Activated naive CD8-positive, alpha-beta T cell treated with anti-CD3 and anti-CD28 coated beads, Interleukin-2, amount 10 ng/mL, durations not matched to agents 7 days and 5 days (primary cell): ENCODE measurements at regions of chr1 and their contacts with region 1.

Region 1: GRCh38 chr1:6602669-6603237 is at the start of gene KLHL21:
- DNase-seq: peak; percentile 90
- ATAC-seq: peak; percentile 65
- H3K4me3 Mint-ChIP-seq: peak within 1 kb of the TSS; percentile 96
- H3K27ac Mint-ChIP-seq: peak within 1 kb of the TSS; percentile 94
- H3K4me1 Mint-ChIP-seq: peaks cover 28% of the 10 kb centered on the region
- H3K27me3 Mint-ChIP-seq: peaks cover 2% of the 10 kb centered on the region
- total RNA-seq, gene KLHL21: 39.0 to 42.0 TPM

Region 2: DNA sequence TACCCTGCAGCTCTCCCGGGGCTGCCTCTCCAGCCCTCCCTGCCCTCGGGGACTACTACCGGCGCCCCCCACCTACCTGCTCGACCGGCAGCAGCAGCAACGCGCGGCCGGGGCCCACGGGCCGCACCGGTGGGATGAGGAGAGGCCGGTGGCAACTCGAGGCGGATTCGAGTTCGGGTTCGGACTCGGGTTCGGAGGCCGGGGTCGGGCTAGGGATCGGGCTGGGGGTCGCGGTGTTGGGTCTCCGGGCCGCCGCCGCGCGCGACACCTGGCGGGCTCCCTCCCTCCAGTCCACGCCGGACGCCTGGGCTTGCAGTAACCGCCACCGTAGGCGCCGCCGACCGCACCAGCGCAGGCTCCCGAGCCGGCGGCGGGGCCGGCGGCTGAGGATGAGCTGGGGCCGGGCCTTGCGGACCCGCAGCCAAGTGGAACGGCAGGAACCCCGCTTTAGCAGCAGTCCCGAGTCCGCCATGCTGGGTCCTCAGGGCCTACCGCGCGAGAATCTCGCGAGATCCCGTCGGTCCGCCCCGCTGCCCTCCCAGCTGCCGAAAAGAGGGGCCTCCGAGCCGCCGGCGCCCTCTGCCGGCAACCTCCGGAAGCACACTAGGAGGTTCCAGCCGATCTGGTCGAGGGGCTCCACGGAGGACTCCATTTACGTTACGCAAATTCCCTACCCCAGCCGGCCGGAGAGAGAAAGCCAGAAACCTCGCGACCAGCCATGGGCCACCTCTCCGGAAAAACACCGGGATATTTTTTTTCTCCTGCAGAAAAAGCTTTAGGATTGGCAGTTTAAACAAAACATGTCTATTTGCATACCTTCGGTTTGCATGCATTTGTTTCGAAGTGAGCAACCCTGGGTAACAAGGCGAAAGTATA is 48.5 kb before region 1 on chr1 and contains the start of gene NOL9:
- POLR2A ChIA-PET with region 1: interaction called, 10 read pairs
- DNase-seq: peak; percentile 98
- ATAC-seq: peak; percentile 97
- H3K4me3 Mint-ChIP-seq: peak within 1 kb of the TSS; percentile 82
- H3K27ac Mint-ChIP-seq: peak within 1 kb of the TSS; percentile 76
- H3K4me1 Mint-ChIP-seq: peaks cover 8% of the 10 kb centered on the region
- H3K27me3 Mint-ChIP-seq: no peaks in the 10 kb centered on the region
- total RNA-seq, gene NOL9: 37.6 to 40.8 TPM

Region 3: DNA sequence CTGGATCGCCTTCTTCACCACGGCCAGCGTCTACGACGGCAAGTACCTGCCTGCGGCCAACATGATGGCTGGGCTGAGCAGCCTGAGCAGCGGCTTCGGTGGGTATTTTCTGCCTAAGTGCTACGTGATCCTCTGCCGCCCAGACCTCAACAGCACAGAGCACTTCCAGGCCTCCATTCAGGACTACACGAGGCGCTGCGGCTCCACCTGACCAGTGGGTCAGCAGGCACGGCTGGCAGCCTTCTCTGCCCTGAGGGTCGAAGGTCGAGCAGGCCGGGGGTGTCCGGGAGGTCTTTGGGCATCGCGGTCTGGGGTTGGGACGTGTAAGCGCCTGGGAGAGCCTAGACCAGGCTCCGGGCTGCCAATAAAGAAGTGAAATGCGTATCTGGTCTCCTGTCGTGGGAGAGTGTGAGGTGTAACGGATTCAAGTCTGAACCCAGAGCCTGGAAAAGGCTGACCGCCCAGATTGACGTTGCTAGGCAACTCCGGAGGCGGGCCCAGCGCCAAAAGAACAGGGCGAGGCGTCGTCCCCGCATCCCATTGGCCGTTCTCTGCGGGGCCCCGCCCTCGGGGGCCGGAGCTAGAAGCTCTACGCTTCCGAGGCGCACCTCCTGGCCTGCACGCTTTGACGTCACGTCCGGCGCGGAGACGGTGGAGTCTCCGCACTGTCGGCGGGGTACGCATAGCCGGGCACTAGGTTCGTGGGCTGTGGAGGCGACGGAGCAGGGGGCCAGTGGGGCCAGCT is 23.2 kb before region 1 on chr1 and contains the start of gene ZBTB48:
- POLR2A ChIA-PET with region 1: interaction called, 41 read pairs
- DNase-seq: peak; percentile 97
- ATAC-seq: peak; percentile 98
- H3K4me3 Mint-ChIP-seq: peak within 1 kb of the TSS; percentile 97
- H3K27ac Mint-ChIP-seq: peak within 1 kb of the TSS; percentile 98
- H3K4me1 Mint-ChIP-seq: peaks cover 24% of the 10 kb centered on the region
- H3K27me3 Mint-ChIP-seq: peaks cover 2% of the 10 kb centered on the region
- total RNA-seq, gene ZBTB48: 42.7 to 52.9 TPM

Region 4: GRCh38 chr1:6613361-6614018 is 10.7 kb after region 1 on chr1 and contains the start of gene PHF13:
- POLR2A ChIA-PET with region 1: interaction called, 38 read pairs
- DNase-seq: peak; percentile 99
- ATAC-seq: peak; percentile 95
- H3K4me3 Mint-ChIP-seq: peak within 1 kb of the TSS; percentile 93
- H3K27ac Mint-ChIP-seq: peak within 1 kb of the TSS; percentile 84
- H3K4me1 Mint-ChIP-seq: peaks cover 17% of the 10 kb centered on the region
- H3K27me3 Mint-ChIP-seq: peaks cover 2% of the 10 kb centered on the region
- total RNA-seq, gene PHF13: 12.1 TPM